ENCODE measurements at regions of chr1 and their contacts with region 1.

Region 1: DNA sequence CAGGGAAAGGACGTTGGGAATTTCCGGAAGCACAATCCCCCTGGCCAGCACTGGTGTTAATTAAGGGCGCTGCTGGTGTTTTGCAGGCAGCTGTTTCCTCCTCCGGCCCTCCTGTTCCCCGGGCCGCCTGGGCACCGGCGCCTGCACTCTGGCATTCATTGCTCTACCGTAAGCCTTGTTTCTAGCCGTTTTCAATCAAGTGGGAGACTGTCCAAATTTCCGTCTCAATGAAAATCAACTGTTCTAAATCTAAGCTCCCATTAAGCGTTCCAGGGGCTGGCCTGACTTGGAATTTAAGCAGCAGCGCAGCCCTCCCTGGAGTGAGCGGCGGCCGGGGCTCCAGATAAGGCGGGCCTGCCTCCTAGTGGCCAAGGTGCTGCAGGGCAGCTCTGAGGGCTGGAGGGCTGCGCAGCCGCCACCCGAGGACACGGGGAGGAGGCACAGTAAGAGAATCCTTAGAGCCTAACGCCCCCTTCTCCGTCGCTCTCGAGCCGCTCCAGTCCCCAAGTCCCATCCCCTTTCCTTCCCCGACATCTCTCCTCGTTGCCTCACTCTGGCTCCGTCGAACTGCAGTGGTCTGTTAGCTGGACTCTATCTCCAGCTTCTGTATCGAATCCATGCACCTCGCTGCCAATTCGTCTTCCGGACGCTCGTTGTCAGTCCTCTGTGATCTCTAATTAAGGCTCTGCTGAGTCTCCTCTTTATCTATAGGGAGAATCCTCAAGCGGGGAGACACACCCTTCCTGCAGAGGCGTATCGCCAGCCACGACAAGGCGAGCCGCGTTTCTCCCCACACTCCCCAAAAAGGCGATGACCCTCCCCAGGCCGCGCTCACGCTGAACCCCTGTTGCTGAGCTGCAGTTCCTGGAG is 57.8 kb upstream of the LRRC8D start:
- DNase-seq: peak; percentile 80
- H3K4me3 Mint-ChIP-seq: peak overlapping the region; percentile 89
- H3K27ac Mint-ChIP-seq: peak overlapping the region; percentile 95
- H3K4me1 Mint-ChIP-seq: peaks cover 56% of the 10 kb centered on the region
- H3K27me3 Mint-ChIP-seq: no peaks in the 10 kb centered on the region

Region 2: DNA sequence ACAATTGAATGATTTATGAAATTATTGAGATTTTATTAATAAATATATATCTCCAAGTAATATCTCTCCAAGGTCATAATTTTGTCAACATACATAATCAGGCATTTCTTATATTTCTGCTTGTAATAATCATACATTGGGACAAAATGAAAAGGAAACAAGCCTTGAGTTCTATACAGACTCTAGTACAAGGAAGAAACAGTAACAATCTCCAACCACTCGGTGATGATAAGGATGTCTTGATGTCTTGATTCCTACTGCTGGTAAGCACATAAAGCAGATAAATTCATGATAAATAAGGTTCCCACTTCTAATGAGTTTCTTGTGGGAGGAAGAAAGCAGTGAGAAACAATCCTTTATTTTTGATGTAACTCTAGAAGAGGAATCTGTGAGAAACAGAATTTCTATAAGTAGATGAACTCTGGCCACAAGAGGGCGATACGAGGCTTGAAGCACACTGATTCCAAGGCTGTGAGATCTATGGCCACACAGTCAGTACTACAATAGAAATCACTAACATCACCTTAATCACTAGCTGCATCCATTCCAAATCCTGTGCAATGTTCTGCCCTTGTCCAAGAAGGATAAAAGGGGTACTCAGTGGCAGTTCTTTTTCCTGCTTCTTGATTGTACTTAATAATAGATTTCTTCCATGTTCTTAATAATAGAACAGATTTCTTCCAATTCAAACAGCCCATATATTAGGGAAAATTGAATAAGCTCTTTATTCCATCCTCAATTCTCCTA is 279.8 kb before region 1 on chr1:
- intact Hi-C with region 1: loop called (anchors 2 kb)
- DNase-seq: peak; percentile 58
- H3K4me3 Mint-ChIP-seq: no peak overlapping the region
- H3K27ac Mint-ChIP-seq: no peak overlapping the region
- H3K4me1 Mint-ChIP-seq: peaks cover 25% of the 10 kb centered on the region
- H3K27me3 Mint-ChIP-seq: no peaks in the 10 kb centered on the region

Region 3: GRCh38 chr1:89649783-89650182 is 113.2 kb before region 1 on chr1:
- intact Hi-C with region 1: no loop called
- DNase-seq: no peak
- H3K4me3 Mint-ChIP-seq: no peak overlapping the region
- H3K27ac Mint-ChIP-seq: peak overlapping the region; percentile 44
- H3K4me1 Mint-ChIP-seq: peaks cover 56% of the 10 kb centered on the region
- H3K27me3 Mint-ChIP-seq: no peaks in the 10 kb centered on the region

Region 4: DNA sequence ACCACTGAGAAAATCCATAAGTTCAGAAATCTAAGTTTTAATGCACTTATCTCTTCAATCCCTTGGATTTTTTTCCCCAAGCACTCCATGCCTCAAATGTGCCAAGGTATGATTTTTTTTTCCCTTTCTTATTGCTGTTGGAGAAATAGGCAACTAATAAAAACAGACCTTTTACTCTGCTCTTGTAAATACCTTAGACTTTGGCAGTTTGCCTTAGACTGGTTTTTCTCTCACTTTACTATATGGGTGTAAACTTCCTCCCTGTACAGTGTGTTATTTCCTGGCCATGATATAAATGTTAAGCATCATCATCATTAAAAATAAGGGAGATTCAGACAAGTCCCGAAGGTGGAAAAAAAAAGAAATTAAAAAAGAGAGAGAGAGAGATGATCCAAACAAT is 64.4 kb before region 1 on chr1:
- intact Hi-C with region 1: loop called (anchors 5 kb)
- DNase-seq: no peak
- H3K4me3 Mint-ChIP-seq: peak overlapping the region; percentile 37
- H3K27ac Mint-ChIP-seq: peak overlapping the region; percentile 89
- H3K4me1 Mint-ChIP-seq: peaks cover 85% of the 10 kb centered on the region
- H3K27me3 Mint-ChIP-seq: no peaks in the 10 kb centered on the region

Region 5: GRCh38 chr1:89804642-89805237 is 41.7 kb after region 1 on chr1:
- intact Hi-C with region 1: no loop called
- DNase-seq: peak; percentile 74
- H3K4me3 Mint-ChIP-seq: no peak overlapping the region
- H3K27ac Mint-ChIP-seq: no peak overlapping the region
- H3K4me1 Mint-ChIP-seq: peaks cover 6% of the 10 kb centered on the region
- H3K27me3 Mint-ChIP-seq: peaks cover 6% of the 10 kb centered on the region

Region 6: DNA sequence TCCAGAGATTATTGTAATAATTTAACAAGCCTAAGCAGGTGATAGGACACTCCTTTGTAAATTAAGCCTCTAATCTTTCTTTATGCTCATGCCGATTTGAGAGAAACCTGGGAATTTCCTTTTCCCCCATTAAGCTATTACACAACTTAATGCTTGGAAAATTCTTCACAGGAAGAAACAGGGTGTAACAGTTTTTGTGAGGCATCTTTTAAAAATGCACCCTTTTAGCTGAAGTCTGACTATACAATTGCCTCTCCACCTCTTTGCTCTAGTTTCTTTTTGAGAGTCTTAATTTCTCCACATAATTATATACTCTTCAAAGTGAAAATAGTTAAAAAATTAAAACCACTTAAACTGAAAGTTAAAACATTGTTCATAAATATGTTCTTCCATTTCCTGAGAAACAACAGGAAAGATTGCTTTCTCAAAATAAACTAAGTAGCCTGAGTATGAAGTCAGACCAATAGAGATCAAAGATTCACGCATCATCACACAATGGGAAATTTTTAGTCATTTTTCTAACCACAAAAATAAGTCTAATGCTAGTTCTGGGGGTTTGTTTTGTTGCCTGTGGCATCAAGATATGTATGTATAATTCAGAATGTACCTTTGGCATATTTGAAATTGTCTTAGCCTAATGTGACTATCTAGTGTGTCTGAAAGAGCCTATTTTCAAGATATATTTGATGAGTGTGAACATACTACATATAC is 92.6 kb after region 1 on chr1:
- intact Hi-C with region 1: no loop called
- DNase-seq: no peak
- H3K4me3 Mint-ChIP-seq: peak overlapping the region; percentile 68
- H3K27ac Mint-ChIP-seq: no peak overlapping the region
- H3K4me1 Mint-ChIP-seq: peaks cover 10% of the 10 kb centered on the region
- H3K27me3 Mint-ChIP-seq: no peaks in the 10 kb centered on the region

Measured in activated T-helper 2 cell treated with anti-CD3 and anti-CD28 coated beads, Interferon-gamma antibody, Interleukin-2, Interleukin-4, amounts not matched to agents 10 μg/mL and 5 μg/mL and 100 μg/mL, durations not matched to agents 14 hours and 24 hours and 36 hours (primary cell).